Mammary epithelial cell (primary cell): ENCODE measurements at regions of chr10 and their contacts with region 1.

Region 1: DNA sequence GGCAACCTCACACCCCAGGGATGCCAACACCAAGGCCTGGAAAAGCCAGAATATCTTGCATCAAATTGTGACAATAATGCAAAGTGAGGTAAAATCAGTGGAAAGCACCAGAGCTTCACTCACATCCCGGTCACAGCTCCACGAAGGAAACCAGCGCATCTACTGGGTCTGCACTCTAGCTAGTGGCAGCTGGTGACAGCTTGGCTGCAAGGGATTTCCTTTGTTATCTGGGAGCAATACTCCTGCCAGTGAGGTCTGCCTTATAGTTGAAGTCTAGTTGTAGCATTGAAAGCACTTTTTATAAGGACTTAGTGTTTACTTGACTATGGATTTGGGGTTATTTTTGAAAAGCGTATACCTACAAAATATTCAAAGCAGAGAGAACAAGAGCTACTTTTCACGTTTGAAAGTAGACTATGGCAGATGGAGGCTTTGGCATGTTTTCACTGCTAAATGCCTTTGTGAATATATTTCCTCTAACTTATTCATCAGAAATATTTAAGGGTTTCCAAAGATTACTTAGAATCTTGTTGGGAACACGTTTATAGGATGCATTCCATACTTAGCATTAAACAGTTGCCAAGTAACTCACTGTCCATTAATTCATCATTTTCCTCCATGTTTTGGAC is 26.1 kb downstream of the WDFY4 start:
- DNase-seq: no peak
- H3K4me3 ChIP-seq: no peak overlapping the region
- H3K27ac ChIP-seq: no peak overlapping the region
- H3K4me1 ChIP-seq: no peaks in the 10 kb centered on the region
- H3K27me3 ChIP-seq: peaks cover 6% of the 10 kb centered on the region
- CTCF ChIP-seq: no peak

Region 2: GRCh38 chr10:48551861-48552591 is 158.7 kb before region 1 on chr10:
- CTCF ChIA-PET with region 1: no interaction called
- dilution Hi-C with region 1: no loop called
- in situ Hi-C with region 1: no loop called
- intact Hi-C with region 1: no loop called
- DNase-seq: peak; percentile 11
- H3K4me3 ChIP-seq: no peak overlapping the region
- H3K27ac ChIP-seq: no peak overlapping the region
- H3K4me1 ChIP-seq: no peaks in the 10 kb centered on the region
- H3K27me3 ChIP-seq: no peaks in the 10 kb centered on the region
- CTCF ChIP-seq: peak; percentile 70 to 72

Region 3: DNA sequence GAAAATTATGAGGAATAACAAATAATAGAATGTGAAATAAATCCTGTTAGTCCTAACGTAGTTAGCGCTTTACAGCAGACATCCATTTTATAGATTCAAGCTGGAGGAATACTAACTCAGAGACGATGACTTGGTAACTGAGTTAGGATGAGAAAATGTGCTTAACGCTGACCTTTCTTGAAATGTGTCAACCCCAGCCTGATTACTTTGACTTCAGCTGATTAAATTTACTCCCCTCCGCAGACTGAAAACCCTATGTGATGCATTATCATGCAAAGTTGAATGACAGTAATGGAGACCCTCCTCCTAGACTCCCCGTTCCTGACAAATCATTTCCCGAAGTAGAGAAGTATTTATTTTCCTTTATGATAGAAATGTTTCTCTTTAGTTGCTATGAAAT is 28.4 kb after region 1 on chr10:
- CTCF ChIA-PET with region 1: no interaction called
- dilution Hi-C with region 1: no loop called
- in situ Hi-C with region 1: no loop called
- intact Hi-C with region 1: loop called (anchors 1 kb)
- DNase-seq: no peak
- H3K4me3 ChIP-seq: no peak overlapping the region
- H3K27ac ChIP-seq: no peak overlapping the region
- H3K4me1 ChIP-seq: peaks cover 4% of the 10 kb centered on the region
- H3K27me3 ChIP-seq: no peaks in the 10 kb centered on the region
- CTCF ChIP-seq: no peak